PC-3 (cell line): ENCODE measurements at regions of chr17 and their contacts with region 1.

Region 1: GRCh38 chr17:81583589-81584342 is 31.6 kb upstream of the FAAP100 start:
- DNase-seq: peak; percentile 86
- ATAC-seq: peak; percentile 89
- H3K4me3 ChIP-seq: no peak overlapping the region
- H3K27ac ChIP-seq: peak overlapping the region; percentile 45
- H3K4me1 ChIP-seq: peaks cover 28% of the 10 kb centered on the region
- H3K27me3 ChIP-seq: no peaks in the 10 kb centered on the region
- CTCF ChIP-seq: no peak

Region 2: DNA sequence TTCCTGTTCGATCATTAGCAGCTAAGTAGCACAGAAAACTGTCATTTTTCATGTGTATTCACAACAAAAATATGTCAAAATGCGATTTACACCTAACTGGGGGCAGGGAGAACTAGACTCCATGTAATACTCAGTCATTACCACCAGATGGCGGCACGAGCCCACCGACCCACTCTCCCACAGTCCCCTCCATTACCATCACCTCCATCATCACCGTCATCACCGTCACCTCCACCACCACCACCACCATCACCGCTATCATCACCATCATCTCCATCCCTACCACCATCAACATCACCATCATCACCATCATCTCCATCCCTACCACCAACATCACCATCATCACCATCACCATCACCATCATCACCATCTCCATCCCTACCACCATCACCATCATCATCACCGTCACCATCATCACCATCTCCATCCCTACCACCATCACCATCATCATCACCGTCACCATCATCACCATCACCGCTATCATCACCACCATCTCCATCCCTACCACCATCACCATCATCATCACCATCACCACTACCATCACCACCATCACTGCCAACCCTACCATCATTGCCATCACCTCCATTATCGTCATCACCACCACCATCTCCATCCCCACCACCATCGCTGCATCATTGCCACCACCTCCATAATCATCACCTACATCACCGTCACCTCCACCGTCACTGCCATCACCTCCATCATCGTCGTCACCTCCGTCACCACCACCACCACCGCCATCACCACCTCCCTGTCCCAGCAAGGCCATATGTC is 330.2 kb before region 1 on chr17:
- CTCF ChIA-PET with region 1: no interaction called
- POLR2A ChIA-PET with region 1: no interaction called
- intact Hi-C with region 1: no loop called
- DNase-seq: peak; percentile 44
- ATAC-seq: no peak
- H3K4me3 ChIP-seq: no peak overlapping the region
- H3K27ac ChIP-seq: no peak overlapping the region
- H3K4me1 ChIP-seq: 0 out of 2 replicates have a peak, but pooled peaks cover 3% of the 10 kb centered on the region
- H3K27me3 ChIP-seq: no peaks in the 10 kb centered on the region
- CTCF ChIP-seq: peak; percentile 85

Region 3: GRCh38 chr17:81601525-81602120 is 17.9 kb after region 1 on chr17:
- CTCF ChIA-PET with region 1: no interaction called
- POLR2A ChIA-PET with region 1: no interaction called
- intact Hi-C with region 1: loop called (anchors 2 kb)
- DNase-seq: peak; percentile 84
- ATAC-seq: peak; percentile 99
- H3K4me3 ChIP-seq: no peak overlapping the region
- H3K27ac ChIP-seq: no peak overlapping the region
- H3K4me1 ChIP-seq: no peaks in the 10 kb centered on the region
- H3K27me3 ChIP-seq: no peaks in the 10 kb centered on the region
- CTCF ChIP-seq: peak; percentile 92